Ascending aorta (tissue), 2 donors: ENCODE measurements at regions of chr16 and their contacts with region 1.

Region 1: GRCh38 chr16:53130159-53131049 is 75.6 kb downstream of the CHD9 start:
- DNase-seq: peak; percentile 88 to 98
- H3K4me3 ChIP-seq: peak overlapping the region; percentile 78 to 97
- H3K27ac ChIP-seq: peak overlapping the region; percentile 91 to 94
- H3K4me1 ChIP-seq: peaks cover 0 to 13% of the 10 kb centered on the region in 2 donors
- H3K27me3 ChIP-seq: no peaks in the 10 kb centered on the region
- CTCF ChIP-seq: peak; percentile 33 to 97 (median 52)

Region 2: GRCh38 chr16:53054670-53055485 is 75.5 kb before region 1 on chr16 and contains the start of gene CHD9:
- intact Hi-C with region 1: loop called (anchors 1 kb)
- DNase-seq: peak; percentile 30 to 90
- H3K4me3 ChIP-seq: peak within 1 kb of the TSS; percentile 47 to 90
- H3K27ac ChIP-seq: peak within 1 kb of the TSS; percentile 82 to 88
- H3K4me1 ChIP-seq: peaks cover 0 to 14% of the 10 kb centered on the region in 2 donors
- H3K27me3 ChIP-seq: no peaks in the 10 kb centered on the region
- CTCF ChIP-seq: peak; percentile 99 to 100 (median 99)
- total RNA-seq, gene CHD9: 56.9 TPM

Region 3: DNA sequence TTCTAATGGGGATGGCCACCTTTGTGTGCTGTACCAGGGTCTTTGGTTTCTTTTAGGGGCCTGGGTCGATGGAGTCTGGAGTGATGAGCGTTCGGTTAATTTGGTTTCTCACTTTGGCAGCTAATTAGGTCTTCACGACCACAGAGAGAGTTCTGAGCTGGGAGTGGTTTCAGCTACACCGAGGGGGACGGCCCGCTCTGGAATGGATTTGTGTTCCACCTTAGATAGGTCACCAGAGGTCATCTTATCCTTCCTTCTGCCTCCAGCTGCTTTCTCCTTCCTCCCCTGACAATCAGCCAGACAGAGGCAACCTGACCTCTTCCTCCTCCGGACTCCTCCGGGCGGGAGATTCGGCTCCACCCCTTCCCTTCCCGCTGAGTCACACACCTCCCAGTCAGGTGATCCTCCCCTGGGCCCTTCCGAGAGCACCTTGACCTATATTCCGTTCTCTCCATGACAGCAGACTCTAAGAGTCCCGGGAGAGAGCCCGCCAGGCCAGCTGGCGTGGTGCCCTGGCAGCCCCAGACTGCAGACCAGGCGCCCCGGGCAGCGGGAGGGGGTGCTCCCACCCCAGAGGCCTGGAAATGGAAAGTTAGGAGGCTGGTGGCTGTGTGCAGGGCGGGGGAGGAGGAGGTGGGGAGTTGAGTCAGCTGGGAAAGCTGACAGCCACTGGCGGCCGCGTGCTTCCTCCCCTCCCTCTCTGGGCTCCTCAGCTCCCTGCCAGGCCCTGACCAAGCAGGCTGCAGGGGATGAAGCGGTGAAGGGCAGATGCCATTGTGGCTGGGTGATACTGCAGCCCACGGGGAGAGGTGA is 30.9 kb before region 1 on chr16:
- intact Hi-C with region 1: loop called (anchors 1 kb)
- DNase-seq: peak; percentile 79 to 96
- H3K4me3 ChIP-seq: peak overlapping the region; percentile 52 to 61
- H3K27ac ChIP-seq: peak overlapping the region; percentile 93 to 94
- H3K4me1 ChIP-seq: peaks cover 5 to 32% of the 10 kb centered on the region in 2 donors
- H3K27me3 ChIP-seq: no peaks in the 10 kb centered on the region
- CTCF ChIP-seq: no peak

Region 4: GRCh38 chr16:53207810-53208752 is 77.7 kb after region 1 on chr16:
- intact Hi-C with region 1: loop called (anchors 2 kb)
- DNase-seq: peak in 1 of 2 donors; percentile 67
- H3K4me3 ChIP-seq: peak overlapping the region; percentile 46 to 55
- H3K27ac ChIP-seq: peak overlapping the region; percentile 66 to 68
- H3K4me1 ChIP-seq: peaks cover 0 to 34% of the 10 kb centered on the region in 2 donors
- H3K27me3 ChIP-seq: no peaks in the 10 kb centered on the region
- CTCF ChIP-seq: peak; percentile 30 to 53 (median 40)

Region 5: DNA sequence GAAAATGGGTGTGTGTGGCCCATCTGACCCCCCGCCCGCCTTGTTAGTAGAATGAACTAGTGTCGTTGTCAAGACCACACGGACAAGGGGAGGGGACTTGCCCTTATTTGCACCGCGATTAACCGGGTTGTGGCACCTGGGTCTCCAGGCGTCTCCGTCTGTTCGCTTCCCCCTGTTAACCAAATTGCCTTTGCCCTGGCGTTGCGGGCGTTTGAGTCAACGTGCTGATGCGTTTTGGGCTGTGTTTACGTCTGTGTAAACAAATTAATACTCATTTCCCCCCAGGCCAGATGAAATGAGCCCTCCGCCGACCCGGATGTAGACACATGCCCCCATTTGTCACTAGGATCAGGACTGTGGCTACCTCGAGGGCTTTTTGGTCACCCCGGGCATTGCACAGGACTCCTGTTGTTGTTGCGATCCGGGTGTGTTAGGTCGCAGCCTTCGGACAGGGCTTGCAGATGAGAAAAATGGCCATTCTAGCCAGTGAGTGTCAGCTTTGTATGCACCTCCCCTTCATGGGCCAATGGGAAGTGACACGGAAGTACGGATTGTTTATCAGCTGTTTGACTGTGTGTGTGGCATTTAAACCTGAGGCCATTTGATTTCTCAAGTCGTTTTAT is 304.8 kb after region 1 on chr16:
- intact Hi-C with region 1: loop called (anchors 10 kb)
- DNase-seq: peak; percentile 41 to 88
- H3K4me3 ChIP-seq: peak overlapping the region; percentile 99
- H3K27ac ChIP-seq: peak overlapping the region; percentile 98
- H3K4me1 ChIP-seq: peaks cover 0 to 13% of the 10 kb centered on the region in 2 donors
- H3K27me3 ChIP-seq: no peaks in the 10 kb centered on the region
- CTCF ChIP-seq: no peak

Region 6: DNA sequence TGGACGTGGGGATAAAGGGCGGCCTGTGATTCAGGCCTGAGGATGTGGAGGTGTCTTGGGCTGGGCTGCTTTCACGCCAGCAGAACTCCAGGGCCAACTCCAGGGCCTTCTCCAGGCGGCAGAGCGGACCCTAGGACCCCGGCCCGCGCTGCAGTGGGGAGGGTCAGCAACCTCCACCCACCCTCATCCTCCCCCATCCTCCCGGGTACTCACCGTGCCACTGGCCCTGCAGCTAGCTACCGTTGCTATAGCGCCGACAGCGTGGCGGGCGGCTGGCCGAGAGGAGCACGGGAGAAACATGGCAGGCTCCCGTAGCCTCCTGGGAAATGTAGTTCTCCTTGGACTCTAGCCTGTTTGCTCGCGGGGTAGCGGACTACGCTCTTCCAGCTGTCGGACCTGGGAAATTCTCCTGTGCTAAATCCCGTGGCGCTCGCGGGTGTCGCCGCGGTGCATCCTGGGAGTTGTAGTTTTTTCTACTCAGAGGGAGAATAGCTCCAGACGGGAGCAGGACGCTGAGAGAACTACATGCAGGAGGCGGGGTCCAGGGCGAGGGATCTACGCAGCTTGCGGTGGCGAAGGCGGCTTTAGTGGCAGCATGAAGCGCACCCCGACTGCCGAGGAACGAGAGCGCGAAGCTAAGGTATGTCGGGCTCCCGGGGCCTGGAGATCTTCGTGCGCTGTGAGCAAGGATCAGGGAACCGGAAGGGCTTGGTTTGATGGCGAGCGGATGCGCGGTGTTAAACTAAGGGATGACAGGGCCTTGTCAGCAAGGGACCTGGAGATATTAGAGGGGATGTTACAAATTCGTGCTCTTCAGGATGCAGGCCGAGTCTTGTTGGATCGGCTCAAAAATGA is 573.4 kb after region 1 on chr16 and contains the starts of genes FTO and RPGRIP1L:
- intact Hi-C with region 1: loop called (anchors 5 kb)
- DNase-seq: peak; percentile 98 to 100
- H3K4me3 ChIP-seq: peak within 1 kb of the TSS; percentile 75 to 84
- H3K27ac ChIP-seq: peak within 1 kb of the TSS; percentile 58 to 70
- H3K4me1 ChIP-seq: peaks cover 0 to 3% of the 10 kb centered on the region in 2 donors
- H3K27me3 ChIP-seq: no peaks in the 10 kb centered on the region
- CTCF ChIP-seq: peak in 1 of 3 experiments; percentile 14
- total RNA-seq, gene FTO: 50.2 TPM
- total RNA-seq, gene RPGRIP1L: 0.96 TPM